ENCODE measurements at regions of chr18 and their contacts with region 1.

Region 1: GRCh38 chr18:36572135-36572856 is 256.5 kb downstream of the TPGS2 start:
- DNase-seq: peak in 5 of 10 donors; percentile 38 to 62 (median 42)

Region 2: DNA sequence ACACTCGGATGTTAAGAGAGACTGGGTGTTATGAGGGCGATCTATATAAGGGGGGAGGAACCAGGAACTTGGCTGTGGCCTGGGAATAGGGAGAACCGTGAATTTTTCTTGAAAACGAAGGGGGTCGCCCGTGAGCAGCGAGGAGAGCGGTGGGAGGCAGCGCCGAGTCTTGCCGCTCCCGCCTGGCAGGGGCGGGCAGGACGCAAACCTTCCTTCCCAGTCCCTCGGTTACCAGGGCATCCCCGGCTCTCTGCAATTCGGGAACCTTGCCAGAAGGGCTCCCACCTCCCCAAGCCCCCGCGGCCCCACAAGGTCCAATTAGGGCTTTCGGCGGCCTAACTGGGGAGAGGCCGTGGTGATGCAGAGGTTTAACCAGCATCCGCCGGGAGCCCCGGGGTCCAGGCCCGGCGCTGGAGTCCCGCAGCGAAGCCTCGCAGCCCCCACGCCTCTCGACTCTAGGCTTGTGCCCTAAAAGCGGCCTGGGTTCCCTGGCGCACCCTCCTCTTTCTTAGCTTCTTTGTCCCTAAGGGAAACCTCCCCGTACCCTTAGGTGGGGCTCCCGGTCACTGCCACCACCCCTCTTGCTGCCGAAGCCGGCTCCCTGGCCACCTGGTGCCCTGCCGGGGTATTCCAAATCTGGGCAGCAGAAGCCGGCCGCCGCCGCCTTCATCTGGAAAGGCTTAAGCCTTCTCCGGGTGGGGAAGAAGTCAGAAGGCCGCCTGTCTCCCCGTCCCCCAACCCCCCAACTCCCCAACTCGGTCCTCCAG is 275.5 kb before region 1 on chr18:
- intact Hi-C with region 1: loop called (anchors 2 kb)
- DNase-seq: peak; percentile 68 to 96 (median 84)

Measured in posterior cingulate gyrus (tissue), 11 donors.